Caco-2 (cell line): ENCODE measurements at regions of chr3 and their contacts with region 1.

Region 1: DNA sequence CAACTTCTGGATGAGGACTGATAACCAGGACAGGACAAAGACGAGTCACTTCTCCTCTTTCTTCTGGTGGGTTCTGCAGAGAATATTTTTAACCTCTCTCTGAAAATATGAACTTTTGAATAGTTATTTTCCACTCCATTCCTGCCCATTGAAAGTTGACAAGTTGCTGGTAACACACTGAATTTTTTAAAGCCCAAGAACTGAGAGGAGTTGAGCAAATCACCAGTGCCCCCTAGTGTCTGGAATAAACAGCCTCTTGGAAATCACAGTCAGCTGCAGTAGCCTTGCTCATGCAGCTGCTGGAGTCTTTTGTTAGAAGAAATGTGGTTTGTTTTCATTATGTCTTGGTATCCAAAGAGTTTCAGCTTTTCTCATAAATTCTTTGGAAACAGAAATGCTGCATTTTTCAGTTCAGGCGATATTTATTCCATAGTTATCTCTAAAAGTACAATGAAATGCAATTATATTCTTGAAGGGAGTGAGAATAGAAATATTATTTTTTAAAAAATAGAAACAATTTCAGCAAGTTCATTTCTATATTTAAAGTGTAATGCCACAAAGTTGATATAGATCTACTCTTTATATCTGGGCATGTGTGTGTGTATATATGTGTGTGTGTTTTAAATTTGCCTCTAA is 741.0 kb upstream of the CBLB start:
- DNase-seq: peak; percentile 45 to 68
- H3K4me3 ChIP-seq: no peak overlapping the region
- H3K4me3 Mint-ChIP-seq: no peak overlapping the region
- H3K27ac Mint-ChIP-seq: no peak overlapping the region
- H3K4me1 ChIP-seq: no peaks in the 10 kb centered on the region
- H3K4me1 Mint-ChIP-seq: no peaks in the 10 kb centered on the region
- H3K27me3 ChIP-seq: no peaks in the 10 kb centered on the region
- H3K27me3 Mint-ChIP-seq: no peaks in the 10 kb centered on the region
- CTCF ChIP-seq: peak; percentile 75 to 84

Region 2: GRCh38 chr3:105518806-105519418 is 1090.9 kb before region 1 on chr3:
- CTCF ChIA-PET with region 1: no interaction called
- POLR2A ChIA-PET with region 1: no interaction called
- intact Hi-C with region 1: loop called (anchors 5 kb)
- DNase-seq: peak in 1 of 2 experiments; percentile 53
- H3K4me3 ChIP-seq: no peak overlapping the region
- H3K4me3 Mint-ChIP-seq: no peak overlapping the region
- H3K27ac Mint-ChIP-seq: no peak overlapping the region
- H3K4me1 ChIP-seq: no peaks in the 10 kb centered on the region
- H3K4me1 Mint-ChIP-seq: no peaks in the 10 kb centered on the region
- H3K27me3 ChIP-seq: no peaks in the 10 kb centered on the region
- H3K27me3 Mint-ChIP-seq: no peaks in the 10 kb centered on the region
- CTCF ChIP-seq: peak; percentile 53 to 67

Region 3: DNA sequence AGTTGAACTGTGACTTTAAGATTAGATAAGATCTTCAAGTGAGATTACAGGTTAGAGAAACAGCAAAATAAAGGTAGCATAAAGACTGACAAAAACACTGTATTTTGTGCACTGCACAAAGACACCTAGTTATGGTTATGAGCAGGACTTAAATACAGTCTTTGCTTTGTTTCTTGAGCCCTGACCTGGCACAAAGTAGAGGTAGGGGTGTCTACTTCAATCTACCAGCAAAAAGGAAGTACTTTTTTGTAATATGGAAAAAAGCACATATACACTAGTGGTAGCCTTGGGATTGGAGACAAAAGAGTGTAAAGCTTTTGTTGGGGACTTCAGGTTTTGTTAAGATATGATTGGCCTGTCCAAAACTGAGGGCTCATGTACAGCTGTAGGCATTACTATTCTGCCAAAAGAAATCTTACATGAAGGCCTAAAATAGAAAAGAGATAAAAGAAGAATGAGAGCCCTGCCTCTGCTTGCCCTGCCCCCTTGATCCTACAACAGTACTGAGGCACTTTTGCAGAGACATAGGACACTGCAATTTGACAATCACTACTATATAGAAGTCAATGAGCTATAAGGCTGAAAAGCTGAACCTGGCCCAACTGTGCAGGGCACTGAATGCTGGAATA is 935.2 kb before region 1 on chr3:
- CTCF ChIA-PET with region 1: no interaction called
- POLR2A ChIA-PET with region 1: no interaction called
- intact Hi-C with region 1: no loop called
- DNase-seq: no peak
- H3K4me3 ChIP-seq: no peak overlapping the region
- H3K4me3 Mint-ChIP-seq: no peak overlapping the region
- H3K27ac Mint-ChIP-seq: no peak overlapping the region
- H3K4me1 ChIP-seq: peaks cover 7% of the 10 kb centered on the region; the same call in 1 of the 2 replicates
- H3K4me1 Mint-ChIP-seq: peaks cover 6% of the 10 kb centered on the region
- H3K27me3 ChIP-seq: no peaks in the 10 kb centered on the region
- H3K27me3 Mint-ChIP-seq: no peaks in the 10 kb centered on the region
- CTCF ChIP-seq: no peak

Region 4: GRCh38 chr3:105686278-105686897 is 923.4 kb before region 1 on chr3:
- CTCF ChIA-PET with region 1: no interaction called
- POLR2A ChIA-PET with region 1: no interaction called
- intact Hi-C with region 1: loop called (anchors 1 kb)
- DNase-seq: no peak
- H3K4me3 ChIP-seq: no peak overlapping the region
- H3K4me3 Mint-ChIP-seq: no peak overlapping the region
- H3K27ac Mint-ChIP-seq: no peak overlapping the region
- H3K4me1 ChIP-seq: peaks cover 9% of the 10 kb centered on the region; the same call in 1 of the 2 replicates
- H3K4me1 Mint-ChIP-seq: peaks cover 9% of the 10 kb centered on the region
- H3K27me3 ChIP-seq: no peaks in the 10 kb centered on the region
- H3K27me3 Mint-ChIP-seq: no peaks in the 10 kb centered on the region
- CTCF ChIP-seq: peak; percentile 49 to 68

Region 5: GRCh38 chr3:107064445-107065060 is 454.8 kb after region 1 on chr3:
- CTCF ChIA-PET with region 1: no interaction called
- POLR2A ChIA-PET with region 1: no interaction called
- intact Hi-C with region 1: loop called (anchors 2 kb)
- DNase-seq: peak; percentile 59 to 73
- H3K4me3 ChIP-seq: no peak overlapping the region
- H3K4me3 Mint-ChIP-seq: no peak overlapping the region
- H3K27ac Mint-ChIP-seq: no peak overlapping the region
- H3K4me1 ChIP-seq: no peaks in the 10 kb centered on the region
- H3K4me1 Mint-ChIP-seq: peaks cover 9% of the 10 kb centered on the region
- H3K27me3 ChIP-seq: no peaks in the 10 kb centered on the region
- H3K27me3 Mint-ChIP-seq: peaks cover 4% of the 10 kb centered on the region
- CTCF ChIP-seq: peak; percentile 59 to 84